ENCODE measurements at regions of chr5 and their contacts with region 1.

Region 1: DNA sequence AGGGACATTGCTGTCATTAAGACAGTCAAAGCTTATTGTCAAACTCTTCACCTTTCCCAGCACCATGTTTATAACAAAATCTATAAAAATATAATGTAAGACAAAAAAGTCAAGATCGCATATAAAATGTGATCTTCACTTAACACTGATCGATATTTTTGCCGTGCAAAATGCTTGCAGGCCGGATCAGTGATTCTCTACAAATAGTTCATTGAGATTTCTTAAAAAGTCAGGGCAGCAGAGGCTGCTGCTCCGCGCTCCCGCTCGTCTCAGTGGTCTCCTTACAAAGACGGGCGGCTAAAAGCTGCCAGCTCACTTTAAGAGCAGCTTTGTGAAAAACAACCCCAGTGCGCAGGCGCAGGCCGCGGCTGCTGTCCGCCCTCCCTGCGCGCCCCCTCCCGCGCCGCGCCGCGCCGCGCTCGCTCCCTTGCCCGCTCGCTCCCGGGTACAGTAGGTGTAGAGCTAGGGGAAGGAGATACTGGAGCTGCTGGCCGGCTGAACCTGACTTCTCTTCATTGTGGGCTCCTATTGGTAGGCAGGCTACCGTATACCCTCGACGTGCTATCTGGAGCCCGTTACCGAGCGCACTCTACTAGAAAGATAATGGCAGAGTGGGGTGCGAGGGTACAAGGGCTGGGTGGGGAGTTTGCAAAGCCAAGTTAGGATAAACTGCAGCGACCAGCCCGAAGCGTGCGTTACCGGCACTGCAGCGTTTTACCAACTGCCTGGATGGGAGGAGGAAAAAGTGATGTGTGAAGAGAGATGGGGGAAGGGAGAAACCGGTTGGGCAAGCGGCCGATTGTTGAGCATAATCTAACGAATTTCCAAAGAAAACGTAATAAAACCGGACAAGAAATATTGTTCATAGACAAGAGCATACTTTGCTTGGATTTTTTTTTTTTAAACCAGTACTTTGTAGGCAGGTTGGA is at the start of gene ARRDC3:
- DNase-seq: peak; percentile 98
- ATAC-seq: peak; percentile 74
- H3K4me3 Mint-ChIP-seq: peak within 1 kb of the TSS; percentile 87
- H3K27ac Mint-ChIP-seq: peak within 1 kb of the TSS; percentile 100
- H3K4me1 Mint-ChIP-seq: peaks cover 18% of the 10 kb centered on the region
- H3K27me3 Mint-ChIP-seq: no peaks in the 10 kb centered on the region
- CTCF ChIP-seq: no peak
- total RNA-seq, gene ARRDC3: 10.3 to 25.1 TPM (median 21.8 TPM) in 3 replicates

Region 2: GRCh38 chr5:90866333-90866732 is 517.0 kb before region 1 on chr5:
- CTCF ChIA-PET with region 1: interaction called, 21 read pairs
- POLR2A ChIA-PET with region 1: interaction called, 7 read pairs
- DNase-seq: no peak
- ATAC-seq: peak; percentile 64
- H3K4me3 Mint-ChIP-seq: no peak overlapping the region
- H3K27ac Mint-ChIP-seq: no peak overlapping the region
- H3K4me1 Mint-ChIP-seq: peaks cover 7% of the 10 kb centered on the region
- H3K27me3 Mint-ChIP-seq: no peaks in the 10 kb centered on the region
- CTCF ChIP-seq: peak; percentile 25; the same call in 1 of the 2 replicates

Region 3: DNA sequence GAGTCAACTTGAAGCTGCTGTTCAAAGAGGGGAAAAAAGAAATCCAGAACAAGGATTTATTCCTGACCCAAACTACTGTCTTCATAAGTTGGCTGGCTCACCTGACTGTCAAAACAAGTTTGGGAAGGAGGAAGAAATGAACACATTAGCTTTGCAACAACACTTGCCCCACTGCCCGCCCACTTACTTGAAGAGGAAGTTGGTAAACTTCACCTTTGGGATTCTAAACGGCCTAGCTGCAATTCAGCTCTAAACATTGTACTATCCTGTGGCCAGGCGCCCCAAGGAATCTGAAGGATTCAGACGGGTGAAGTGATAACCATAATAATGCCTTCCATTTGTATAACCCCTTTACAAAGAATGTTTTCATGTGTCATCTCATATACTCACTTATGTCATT is 199.6 kb before region 1 on chr5:
- CTCF ChIA-PET with region 1: interaction called, 29 read pairs
- POLR2A ChIA-PET with region 1: interaction called, 13 read pairs
- DNase-seq: no peak
- ATAC-seq: peak; percentile 78
- H3K4me3 Mint-ChIP-seq: no peak overlapping the region
- H3K27ac Mint-ChIP-seq: peak overlapping the region; percentile 75
- H3K4me1 Mint-ChIP-seq: peaks cover 22% of the 10 kb centered on the region
- H3K27me3 Mint-ChIP-seq: no peaks in the 10 kb centered on the region
- CTCF ChIP-seq: no peak

Region 4: DNA sequence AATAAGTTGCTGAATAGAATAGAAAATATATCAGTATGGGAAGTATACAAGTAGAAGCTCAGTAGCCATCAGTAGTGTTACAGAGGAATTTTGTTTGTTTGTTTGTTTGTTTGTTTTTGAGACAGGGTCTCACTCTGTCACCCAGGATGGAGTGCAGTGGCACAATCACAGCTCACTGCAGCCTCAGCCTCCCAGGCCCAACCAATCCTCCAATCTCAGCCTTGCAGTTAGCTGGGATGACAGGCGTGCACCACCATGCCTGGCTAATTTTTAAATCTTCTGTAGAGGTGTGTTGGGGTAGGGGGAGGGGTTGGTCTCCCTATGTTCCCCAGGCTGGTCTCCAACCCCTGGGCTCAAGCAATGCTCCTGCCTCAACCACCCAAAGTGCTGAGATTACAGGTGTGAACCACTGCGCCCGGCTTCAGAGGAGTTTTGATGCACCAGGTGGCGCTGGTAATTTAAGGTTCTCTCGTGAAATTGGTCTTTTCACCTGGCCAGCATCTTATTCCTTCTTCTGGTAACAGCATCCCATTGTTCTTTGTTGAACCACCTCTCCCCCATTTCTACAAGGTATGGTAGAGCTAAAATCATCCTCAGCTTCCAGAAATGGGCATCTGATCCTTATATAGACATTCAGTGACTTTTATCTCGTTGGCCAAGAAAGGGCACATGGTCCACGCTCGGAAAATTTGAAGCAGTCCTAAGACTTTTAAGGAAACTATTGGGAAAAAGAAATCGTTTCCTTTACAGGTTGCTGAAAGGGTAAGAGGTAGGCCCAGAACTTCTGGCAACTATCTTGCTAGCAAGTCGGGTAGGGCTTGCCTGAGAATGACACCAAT is 157.2 kb before region 1 on chr5:
- CTCF ChIA-PET with region 1: interaction called, 91 read pairs
- POLR2A ChIA-PET with region 1: interaction called, 7 read pairs
- DNase-seq: peak; percentile 74
- ATAC-seq: peak; percentile 94
- H3K4me3 Mint-ChIP-seq: no peak overlapping the region
- H3K27ac Mint-ChIP-seq: no peak overlapping the region
- H3K4me1 Mint-ChIP-seq: peaks cover 3% of the 10 kb centered on the region; the same call in 1 of the 2 replicates
- H3K27me3 Mint-ChIP-seq: no peaks in the 10 kb centered on the region; the same call in 1 of the 2 replicates
- CTCF ChIP-seq: peak; percentile 19; the same call in 1 of the 2 replicates

Region 5: DNA sequence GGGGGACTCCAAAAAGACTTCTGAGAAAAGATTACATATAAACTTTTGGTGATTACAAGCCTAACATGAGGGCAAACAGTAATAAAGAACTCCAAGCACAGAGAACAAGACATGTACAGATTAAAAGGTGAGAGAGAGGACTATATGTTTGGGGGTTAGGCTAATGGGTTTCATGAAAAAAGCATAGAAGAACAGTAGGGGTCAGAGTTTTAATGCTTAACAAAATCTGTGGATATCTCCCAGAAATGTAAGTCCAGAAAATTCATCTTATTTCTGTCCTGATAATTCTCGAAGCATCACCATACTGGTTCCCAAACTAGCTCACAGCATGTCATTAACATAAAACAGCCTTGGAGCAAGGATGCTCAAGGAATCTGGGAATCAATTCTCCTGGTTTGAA is 137.4 kb before region 1 on chr5:
- CTCF ChIA-PET with region 1: interaction called, 27 read pairs
- POLR2A ChIA-PET with region 1: interaction called, 10 read pairs
- DNase-seq: no peak
- ATAC-seq: no peak
- H3K4me3 Mint-ChIP-seq: no peak overlapping the region
- H3K27ac Mint-ChIP-seq: no peak overlapping the region
- H3K4me1 Mint-ChIP-seq: no peaks in the 10 kb centered on the region
- H3K27me3 Mint-ChIP-seq: no peaks in the 10 kb centered on the region
- CTCF ChIP-seq: no peak

Region 6: GRCh38 chr5:91315701-91316100 is 67.6 kb before region 1 on chr5:
- CTCF ChIA-PET with region 1: interaction called, 10 read pairs
- POLR2A ChIA-PET with region 1: interaction called, 3 read pairs
- DNase-seq: no peak
- ATAC-seq: no peak
- H3K4me3 Mint-ChIP-seq: no peak overlapping the region
- H3K27ac Mint-ChIP-seq: peak overlapping the region; percentile 20
- H3K4me1 Mint-ChIP-seq: peaks cover 32% of the 10 kb centered on the region
- H3K27me3 Mint-ChIP-seq: no peaks in the 10 kb centered on the region
- CTCF ChIP-seq: no peak

Region 7: DNA sequence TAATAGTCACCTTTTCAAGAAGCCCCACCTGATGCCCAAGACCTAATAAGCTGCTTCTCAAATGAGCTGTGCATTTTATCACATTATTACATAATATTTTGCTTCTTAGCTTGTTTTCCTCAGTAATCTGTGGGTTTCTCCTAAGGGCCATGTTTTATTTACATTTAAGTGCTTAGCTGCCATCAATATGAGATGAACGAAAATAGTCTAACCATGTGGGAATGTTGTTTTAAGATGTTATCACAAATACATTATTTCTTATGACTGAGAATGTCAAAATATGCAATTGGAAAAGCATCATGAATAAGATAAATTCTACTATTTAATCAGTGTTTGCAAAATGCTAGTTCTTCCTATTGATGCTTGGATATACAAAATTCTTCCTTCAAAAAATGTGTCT is 10.3 kb before region 1 on chr5:
- CTCF ChIA-PET with region 1: interaction called, 4 read pairs
- POLR2A ChIA-PET with region 1: interaction called, 23 read pairs
- DNase-seq: no peak
- ATAC-seq: no peak
- H3K4me3 Mint-ChIP-seq: no peak overlapping the region
- H3K27ac Mint-ChIP-seq: no peak overlapping the region
- H3K4me1 Mint-ChIP-seq: no peaks in the 10 kb centered on the region
- H3K27me3 Mint-ChIP-seq: no peaks in the 10 kb centered on the region
- CTCF ChIP-seq: no peak